ENCODE measurements at regions of chr17 and their contacts with region 1.

Region 1: DNA sequence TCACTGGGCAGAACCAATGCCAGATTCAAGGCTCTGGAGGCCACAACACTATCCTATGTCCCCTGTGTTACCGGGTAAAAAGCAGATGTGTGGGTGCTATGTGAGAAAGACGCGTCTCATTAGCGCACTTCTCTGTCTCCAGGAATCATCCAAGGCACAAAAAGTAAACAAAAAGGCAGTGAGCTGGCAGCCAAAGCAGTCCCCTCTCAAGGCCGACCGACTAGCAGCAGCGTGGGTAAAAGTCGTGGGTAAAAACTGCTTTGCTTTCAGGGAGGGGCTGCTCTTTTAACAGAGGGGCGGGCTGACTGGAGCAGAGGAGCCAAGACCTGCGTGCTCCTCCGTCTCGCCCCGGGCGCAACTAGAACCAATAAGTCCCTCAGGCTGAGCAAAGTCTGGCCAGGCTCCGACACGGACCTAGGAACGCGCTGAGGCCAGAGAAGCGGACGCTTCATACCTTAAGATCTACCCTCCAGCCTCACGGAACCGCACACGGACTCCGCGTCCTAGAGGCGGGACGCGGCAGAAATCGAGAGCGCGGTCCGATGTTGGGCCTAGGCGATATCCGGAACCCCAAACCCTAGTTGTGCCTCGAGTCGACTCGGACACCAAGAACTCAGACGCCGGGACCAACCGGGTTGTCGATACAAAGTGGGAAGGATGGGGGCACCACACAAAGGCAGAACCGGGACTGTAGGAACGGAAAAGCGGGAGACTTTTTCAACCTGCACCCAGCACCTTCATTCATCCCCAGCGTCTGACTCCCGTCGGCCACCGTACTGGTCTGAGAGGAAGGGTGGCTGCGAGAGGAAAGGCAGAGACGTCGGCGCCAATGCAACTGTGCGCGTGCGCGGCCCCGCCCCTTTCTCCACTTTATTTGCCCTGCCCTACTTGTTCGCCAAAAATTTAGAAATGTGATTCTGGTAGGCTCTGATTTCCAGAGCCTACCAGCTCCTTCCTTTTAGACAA is at the start of gene INTS2:
- DNase-seq: peak; percentile 96 to 98
- ATAC-seq: peak; percentile 89 to 94 (median 91)
- H3K4me3 ChIP-seq: peak within 1 kb of the TSS; percentile 93
- H3K4me3 Mint-ChIP-seq: peak within 1 kb of the TSS; percentile 91
- H3K27ac ChIP-seq: peak within 1 kb of the TSS; percentile 85
- H3K27ac Mint-ChIP-seq: peak within 1 kb of the TSS; percentile 93 to 98
- H3K4me1 ChIP-seq: peaks cover 14% of the 10 kb centered on the region
- H3K4me1 Mint-ChIP-seq: peaks cover 19 to 23% of the 10 kb centered on the region in 2 donors
- H3K27me3 ChIP-seq: no peaks in the 10 kb centered on the region
- H3K27me3 Mint-ChIP-seq: no peaks in the 10 kb centered on the region
- CTCF ChIP-seq: no peak
- total RNA-seq, gene INTS2: 14.2 to 21.0 (median 14.6) TPM

Region 2: DNA sequence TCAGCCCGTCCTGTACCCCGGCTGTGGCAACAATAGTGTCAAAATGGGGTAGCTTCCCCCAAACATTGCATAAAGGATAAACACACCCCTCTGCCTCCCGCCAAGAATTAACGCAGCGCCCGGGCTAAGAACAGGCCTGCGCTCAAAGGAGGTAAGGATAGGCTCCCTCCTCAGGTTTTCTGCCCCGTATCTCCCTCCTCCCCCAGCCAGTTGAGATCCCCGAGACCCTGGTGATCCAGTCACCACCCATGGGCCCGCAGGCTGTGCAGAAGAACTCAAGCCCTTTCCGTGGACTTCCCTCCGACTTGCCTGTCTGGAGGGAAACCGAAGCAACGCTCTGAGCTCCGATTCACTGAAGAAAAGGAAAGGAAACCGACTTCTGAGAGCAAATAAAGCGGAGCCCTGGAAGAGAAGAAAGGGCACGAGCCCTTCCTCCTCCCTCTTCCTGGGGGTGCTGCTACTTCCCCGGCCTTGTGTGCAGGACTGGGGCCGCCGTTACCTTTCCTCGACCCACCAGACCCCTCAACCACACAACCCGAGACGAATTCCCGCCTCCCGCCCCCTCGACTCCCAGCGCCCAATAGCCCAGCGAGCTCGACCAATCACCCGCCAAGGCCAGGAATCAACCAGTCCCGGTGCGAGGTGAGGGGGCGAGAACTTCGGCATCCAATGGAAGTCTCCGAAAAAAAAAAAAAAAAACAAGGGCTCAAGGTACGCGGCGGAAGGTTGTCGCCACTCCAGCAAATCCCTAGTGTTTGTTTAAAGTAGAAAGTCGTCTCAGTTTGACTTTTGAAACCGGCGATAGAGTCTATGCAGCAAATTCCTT is 64.3 kb before region 1 on chr17 and contains the start of gene BRIP1:
- intact Hi-C with region 1: loop called (anchors 1 kb)
- DNase-seq: peak; percentile 81 to 93
- ATAC-seq: peak; percentile 98 to 99 (median 98)
- H3K4me3 ChIP-seq: peak within 1 kb of the TSS; percentile 95
- H3K4me3 Mint-ChIP-seq: peak within 1 kb of the TSS; percentile 97
- H3K27ac ChIP-seq: peak within 1 kb of the TSS; percentile 68
- H3K27ac Mint-ChIP-seq: peak within 1 kb of the TSS; percentile 89 to 92
- H3K4me1 ChIP-seq: peaks cover 7% of the 10 kb centered on the region
- H3K4me1 Mint-ChIP-seq: peaks cover 16 to 18% of the 10 kb centered on the region in 2 donors
- H3K27me3 ChIP-seq: no peaks in the 10 kb centered on the region
- H3K27me3 Mint-ChIP-seq: no peaks in the 10 kb centered on the region
- CTCF ChIP-seq: no peak
- total RNA-seq, gene BRIP1: 2.7 to 3.7 (median 2.9) TPM

Region 3: GRCh38 chr17:61883211-61883610 is 44.3 kb before region 1 on chr17:
- intact Hi-C with region 1: no loop called
- DNase-seq: no peak
- ATAC-seq: no peak
- H3K4me3 ChIP-seq: no peak overlapping the region
- H3K4me3 Mint-ChIP-seq: no peak overlapping the region
- H3K27ac ChIP-seq: no peak overlapping the region
- H3K27ac Mint-ChIP-seq: no peak overlapping the region
- H3K4me1 ChIP-seq: no peaks in the 10 kb centered on the region
- H3K4me1 Mint-ChIP-seq: no peaks in the 10 kb centered on the region
- H3K27me3 ChIP-seq: no peaks in the 10 kb centered on the region
- H3K27me3 Mint-ChIP-seq: no peaks in the 10 kb centered on the region
- CTCF ChIP-seq: no peak